Esophagus muscularis mucosa (tissue), 4 donors: ENCODE measurements at regions of chr7 and their contacts with region 1.

Region 1: DNA sequence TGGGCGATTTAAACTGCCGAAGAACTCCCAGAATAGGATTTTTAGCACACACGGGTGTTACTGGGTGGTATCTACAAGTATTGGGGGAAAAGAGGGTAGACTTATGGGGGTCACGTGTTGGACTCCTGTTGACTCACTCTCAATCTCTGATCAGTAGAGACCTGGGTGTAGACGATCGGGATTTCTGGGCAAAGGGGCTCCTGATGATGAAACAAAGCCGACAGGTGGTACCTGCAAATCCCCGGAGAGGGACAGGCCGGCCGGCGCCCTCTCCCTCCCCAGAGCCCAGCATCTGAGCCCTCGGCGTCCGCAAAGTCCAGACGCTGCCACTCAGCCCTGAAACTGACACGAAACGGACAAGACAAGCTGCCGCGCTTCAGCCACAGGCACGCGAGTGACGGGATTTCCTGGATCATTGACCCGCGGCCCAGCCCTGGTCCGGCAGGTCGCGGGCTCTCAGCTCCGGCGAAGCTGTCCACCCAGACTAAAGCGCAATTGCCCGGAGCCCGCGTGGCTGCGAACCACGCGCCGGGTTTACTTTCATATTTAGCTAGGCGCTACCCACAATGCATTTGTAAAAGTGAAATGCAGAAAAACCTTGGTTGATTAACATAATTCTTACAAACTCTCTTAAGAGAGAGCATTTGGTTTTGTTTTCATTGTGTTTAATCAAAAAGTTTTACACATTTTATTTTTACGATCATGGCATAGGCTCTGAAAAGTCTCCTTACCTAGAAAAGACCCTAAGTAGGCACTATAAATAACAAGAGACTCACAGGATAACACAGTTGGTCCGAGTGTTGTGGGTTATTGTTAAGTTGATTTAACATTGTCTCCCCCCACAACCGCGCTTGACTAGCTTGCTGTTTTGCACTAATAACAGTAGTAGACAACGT is 56.9 kb upstream of the EZH2 start:
- DNase-seq: peak; percentile 94
- H3K4me3 ChIP-seq: peak overlapping the region; percentile 58 to 85 (median 79)
- H3K27ac ChIP-seq: peak overlapping the region; percentile 85 to 88 (median 87)
- H3K4me1 ChIP-seq: peaks cover 5 to 17% (median 16%) of the 10 kb centered on the region in 4 donors
- H3K27me3 ChIP-seq: no peaks in the 10 kb centered on the region
- CTCF ChIP-seq: no peak
- EP300 ChIP-seq: no peak
- POLR2A ChIP-seq: no peak

Region 2: GRCh38 chr7:148664324-148664723 is 276.6 kb before region 1 on chr7:
- intact Hi-C with region 1: no loop called
- DNase-seq: no peak
- H3K4me3 ChIP-seq: no peak overlapping the region
- H3K27ac ChIP-seq: no peak overlapping the region
- H3K4me1 ChIP-seq: peaks cover 0 to 5% (median 0%) of the 10 kb centered on the region in 4 donors
- H3K27me3 ChIP-seq: no peaks in the 10 kb centered on the region
- CTCF ChIP-seq: no peak
- EP300 ChIP-seq: no peak
- POLR2A ChIP-seq: no peak

Region 3: DNA sequence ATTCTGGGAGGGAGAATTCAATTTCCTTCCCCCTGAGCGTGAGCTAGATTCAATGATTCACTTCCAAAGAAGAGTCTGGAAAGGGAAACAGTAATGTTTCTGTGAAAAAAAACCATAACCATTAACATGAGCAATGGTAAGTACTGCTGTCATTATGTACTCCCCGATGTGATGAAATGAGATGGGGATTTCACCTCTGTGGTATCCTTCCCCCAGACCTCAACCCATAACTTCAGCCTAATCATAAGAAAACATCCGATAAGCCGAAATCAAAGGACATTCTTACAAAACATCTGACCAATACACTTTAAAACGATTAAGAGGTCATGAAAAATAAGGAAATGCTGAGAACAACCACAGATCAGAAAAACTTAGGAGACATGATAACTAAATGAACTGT is 84.1 kb before region 1 on chr7:
- intact Hi-C with region 1: loop called (anchors 5 kb)
- DNase-seq: no peak
- H3K4me3 ChIP-seq: no peak overlapping the region
- H3K27ac ChIP-seq: no peak overlapping the region
- H3K4me1 ChIP-seq: peaks cover 0 to 4% (median 0%) of the 10 kb centered on the region in 4 donors
- H3K27me3 ChIP-seq: no peaks in the 10 kb centered on the region
- CTCF ChIP-seq: no peak
- EP300 ChIP-seq: no peak
- POLR2A ChIP-seq: no peak

Region 4: DNA sequence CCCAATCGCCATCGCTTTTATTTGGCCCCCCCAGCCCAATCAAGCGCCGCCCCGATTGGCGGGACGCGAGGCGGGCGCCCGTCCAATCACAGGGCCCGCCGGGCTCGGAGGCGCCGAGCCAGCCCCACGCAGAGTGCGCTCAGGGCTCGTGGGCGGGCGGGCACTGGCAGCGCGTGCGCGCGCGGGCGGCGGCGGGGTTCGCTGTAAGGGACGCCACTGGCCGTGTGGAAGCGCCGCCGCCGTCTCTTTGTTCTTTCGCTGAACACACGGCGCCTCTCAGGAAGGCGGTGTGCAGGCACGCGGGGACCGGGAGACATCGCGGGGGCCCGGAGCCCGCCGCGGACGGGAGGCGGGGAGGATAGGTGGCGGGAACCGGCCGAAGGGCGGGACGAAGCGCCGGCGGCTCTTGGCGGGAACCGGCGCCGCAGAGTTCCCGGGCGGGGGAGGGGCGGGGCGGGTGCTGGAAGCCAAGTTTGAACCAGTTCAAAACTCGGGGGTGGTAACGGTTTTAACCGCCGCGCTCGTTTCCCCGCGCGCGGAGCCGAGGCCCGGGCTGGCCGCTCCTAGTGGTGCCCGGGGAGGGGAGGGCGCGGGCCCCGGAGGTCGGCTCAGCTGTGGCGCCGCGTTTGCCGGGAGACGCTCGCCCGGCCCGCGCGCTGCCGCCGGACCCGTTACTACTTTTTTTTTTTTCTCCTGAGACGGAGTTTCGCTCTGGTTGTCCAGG is 56.5 kb before region 1 on chr7:
- intact Hi-C with region 1: loop called (anchors 5 kb)
- DNase-seq: peak; percentile 97
- H3K4me3 ChIP-seq: peak overlapping the region; percentile 84 to 97 (median 94)
- H3K27ac ChIP-seq: peak overlapping the region; percentile 88 to 98 (median 94)
- H3K4me1 ChIP-seq: peaks cover 0 to 18% (median 17%) of the 10 kb centered on the region in 4 donors
- H3K27me3 ChIP-seq: peaks cover 0 to 18% (median 2%) of the 10 kb centered on the region in 4 donors
- CTCF ChIP-seq: no peak
- EP300 ChIP-seq: no peak
- POLR2A ChIP-seq: peak; percentile 44